ENCODE measurements at regions of chr1 and their contacts with region 1.

Region 1: GRCh38 chr1:110986407-110986891 is 22.7 kb upstream of the LRIF1 start:
- DNase-seq: no peak
- H3K4me3 Mint-ChIP-seq: no peak overlapping the region
- H3K27ac Mint-ChIP-seq: no peak overlapping the region
- H3K4me1 Mint-ChIP-seq: peaks cover 13% of the 10 kb centered on the region
- H3K27me3 Mint-ChIP-seq: peaks cover 13% of the 10 kb centered on the region

Region 2: DNA sequence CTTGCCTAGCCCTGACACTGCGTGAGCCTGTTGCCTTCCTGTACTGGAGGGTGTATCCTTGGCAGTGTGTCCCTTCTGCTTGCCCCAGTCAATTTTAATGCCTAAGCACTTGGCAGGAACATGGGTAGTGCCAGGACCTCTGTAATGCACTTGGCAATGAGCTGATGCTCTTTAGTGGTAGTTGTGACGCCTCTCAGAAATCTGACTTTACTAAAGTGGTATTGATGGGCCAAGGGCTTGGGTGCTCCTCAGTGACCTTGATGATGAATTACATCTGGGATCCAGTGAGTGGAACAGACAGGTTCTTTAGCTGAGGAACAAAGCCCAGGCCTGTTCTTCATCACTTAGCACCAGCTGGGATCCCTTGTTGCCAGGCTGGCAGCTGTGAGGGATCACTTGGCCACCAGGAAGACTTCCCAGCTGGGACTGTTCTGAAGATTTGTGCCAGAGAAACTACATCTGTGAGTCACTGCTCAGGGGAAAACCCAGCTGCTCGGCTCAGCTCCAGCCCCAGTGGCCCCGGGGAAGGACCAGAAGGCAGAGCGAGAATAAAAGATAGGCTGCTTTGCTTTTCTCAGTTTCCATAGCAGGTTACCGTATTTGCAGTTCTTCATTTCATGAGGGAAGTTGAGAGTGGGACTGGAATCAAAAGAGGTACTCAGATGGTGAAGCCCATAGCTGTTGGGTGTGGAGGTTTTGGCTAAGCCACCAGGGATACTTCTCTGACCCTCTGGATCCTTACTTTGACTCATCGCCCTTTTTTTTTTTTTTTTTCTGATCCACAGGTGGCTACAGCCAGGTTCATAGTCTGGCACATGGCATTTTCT is 351.8 kb before region 1 on chr1:
- CTCF ChIA-PET with region 1: no interaction called
- POLR2A ChIA-PET with region 1: no interaction called
- intact Hi-C with region 1: no loop called
- DNase-seq: peak; percentile 91
- H3K4me3 Mint-ChIP-seq: peak overlapping the region; percentile 51
- H3K27ac Mint-ChIP-seq: peak overlapping the region; percentile 93
- H3K4me1 Mint-ChIP-seq: peaks cover 68% of the 10 kb centered on the region
- H3K27me3 Mint-ChIP-seq: no peaks in the 10 kb centered on the region

Region 3: GRCh38 chr1:110787328-110788071 is 198.9 kb before region 1 on chr1:
- CTCF ChIA-PET with region 1: interaction called, 62 read pairs
- POLR2A ChIA-PET with region 1: no interaction called
- intact Hi-C with region 1: no loop called
- DNase-seq: peak; percentile 38
- H3K4me3 Mint-ChIP-seq: no peak overlapping the region
- H3K27ac Mint-ChIP-seq: peak overlapping the region; percentile 66
- H3K4me1 Mint-ChIP-seq: peaks cover 50% of the 10 kb centered on the region
- H3K27me3 Mint-ChIP-seq: no peaks in the 10 kb centered on the region

Region 4: DNA sequence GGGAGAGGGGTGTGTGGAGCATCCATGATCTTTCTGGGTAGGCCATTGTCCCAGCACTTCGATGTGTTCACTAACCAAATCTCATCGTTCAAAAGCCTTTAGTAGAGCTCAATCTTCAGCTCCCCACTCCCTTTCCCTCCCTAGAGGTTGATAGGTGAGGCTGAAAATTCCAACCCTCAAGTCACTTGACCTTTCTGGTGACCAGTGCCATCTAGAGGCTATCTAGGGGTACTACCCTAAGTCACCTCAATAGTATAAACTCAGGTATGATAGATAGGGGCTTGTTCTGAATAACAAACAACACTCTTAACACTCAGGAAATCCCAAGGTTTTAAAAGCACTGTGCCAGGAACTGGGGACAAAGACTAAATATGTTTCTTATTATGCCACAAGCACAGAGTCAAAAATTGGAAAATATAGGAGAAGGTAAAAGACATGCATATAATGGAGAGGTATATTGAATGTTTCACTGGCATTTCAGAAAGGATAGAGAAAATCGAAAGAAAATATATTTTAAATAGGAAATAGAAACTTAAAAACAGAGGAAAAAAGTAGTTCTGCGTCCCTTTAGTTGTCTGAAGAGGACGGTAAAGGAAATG is 156.4 kb before region 1 on chr1:
- CTCF ChIA-PET with region 1: interaction called, 14 read pairs
- POLR2A ChIA-PET with region 1: no interaction called
- intact Hi-C with region 1: no loop called
- DNase-seq: peak; percentile 13
- H3K4me3 Mint-ChIP-seq: no peak overlapping the region
- H3K27ac Mint-ChIP-seq: no peak overlapping the region
- H3K4me1 Mint-ChIP-seq: peaks cover 2% of the 10 kb centered on the region
- H3K27me3 Mint-ChIP-seq: peaks cover 1% of the 10 kb centered on the region